Motor neuron (in vitro differentiated cells): ENCODE measurements at regions of chr2 and their contacts with region 1.

Region 1: DNA sequence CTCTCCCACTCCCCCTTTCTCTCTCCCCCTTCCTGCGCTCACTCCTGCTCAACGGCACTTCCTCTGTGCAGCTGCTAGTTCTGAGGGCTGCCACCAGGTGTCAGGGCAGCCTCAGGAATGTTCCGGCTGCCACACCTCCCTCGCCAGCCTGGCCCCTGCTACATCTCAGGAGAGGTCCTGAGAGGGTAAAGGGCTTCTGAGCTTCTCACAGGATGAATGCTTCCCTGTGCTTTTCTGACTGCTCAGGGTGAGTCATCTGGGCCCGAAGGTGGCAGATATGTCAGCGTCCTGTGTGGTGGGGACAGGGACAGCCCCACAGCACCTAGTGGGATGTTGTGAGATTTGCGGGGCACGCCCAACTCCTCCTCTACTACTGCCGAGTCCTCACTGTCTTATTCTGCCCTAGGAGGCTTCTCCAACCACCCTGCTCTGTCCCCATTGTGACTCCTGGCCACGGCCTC is 49.0 kb downstream of the PLEKHB2 start:
- ATAC-seq: peak; percentile 51 to 96 (median 94)
- H3K4me3 ChIP-seq: no peak overlapping the region
- H3K27ac ChIP-seq: no peak overlapping the region
- H3K4me1 ChIP-seq: peaks cover 0 to 3% of the 10 kb centered on the region in 2 donors

Region 2: GRCh38 chr2:130930740-130931659 is 223.1 kb before region 1 on chr2:
- in situ Hi-C with region 1: no loop called
- ATAC-seq: no peak
- H3K4me3 ChIP-seq: no peak overlapping the region
- H3K27ac ChIP-seq: no peak overlapping the region
- H3K4me1 ChIP-seq: no peaks in the 10 kb centered on the region

Region 3: DNA sequence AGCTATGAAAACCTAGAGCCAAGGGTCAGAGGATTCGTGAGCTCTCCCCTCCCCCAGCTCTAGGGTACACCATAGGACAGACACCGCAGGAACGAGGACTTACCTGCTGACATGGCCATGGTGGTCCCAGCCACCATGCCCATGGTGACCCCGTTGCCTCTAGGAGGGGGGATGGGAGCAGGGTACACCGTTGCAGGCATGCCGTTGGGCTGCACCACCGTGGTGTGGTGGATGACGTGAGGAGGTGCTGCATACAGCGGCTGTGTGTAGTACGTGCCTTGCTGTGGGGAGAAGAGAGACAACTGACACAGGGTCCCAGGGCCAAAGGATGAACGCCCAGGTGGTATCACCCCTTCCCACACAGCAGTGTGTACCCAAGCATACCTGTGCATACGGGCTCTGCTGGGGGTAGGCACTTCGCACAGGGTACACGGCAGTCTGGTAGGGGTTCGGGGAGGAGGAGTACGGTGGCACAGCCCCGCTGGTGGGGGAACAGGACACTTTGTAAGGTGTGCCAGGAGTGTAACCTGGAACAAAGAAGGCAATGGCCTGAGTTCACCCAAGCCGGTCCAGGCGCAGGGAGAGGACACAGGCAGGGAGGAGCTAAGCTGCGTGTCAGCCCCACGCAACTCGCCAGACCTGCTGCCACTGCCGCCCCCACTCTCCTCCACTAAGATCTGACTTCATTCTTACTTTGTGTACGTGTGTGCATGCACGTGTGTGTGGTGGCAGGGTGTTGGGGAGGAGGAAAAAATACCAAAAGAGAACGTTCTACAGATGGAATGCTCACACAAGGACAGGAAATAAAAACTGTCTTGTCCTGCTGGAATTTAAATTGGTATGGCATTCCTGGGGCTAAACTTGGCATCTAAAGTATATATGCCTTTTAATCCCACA is 98.7 kb before region 1 on chr2:
- in situ Hi-C with region 1: no loop called
- ATAC-seq: peak in 2 of 8 experiments; percentile 10 to 17
- H3K4me3 ChIP-seq: no peak overlapping the region
- H3K27ac ChIP-seq: no peak overlapping the region
- H3K4me1 ChIP-seq: no peaks in the 10 kb centered on the region

Region 4: GRCh38 chr2:131349021-131349420 is 194.9 kb after region 1 on chr2:
- in situ Hi-C with region 1: loop called in 1 of 9 experiments (anchors 25 kb)
- ATAC-seq: no peak
- H3K4me3 ChIP-seq: no peak overlapping the region
- H3K27ac ChIP-seq: no peak overlapping the region
- H3K4me1 ChIP-seq: peaks cover 0 to 4% of the 10 kb centered on the region in 2 donors

Region 5: DNA sequence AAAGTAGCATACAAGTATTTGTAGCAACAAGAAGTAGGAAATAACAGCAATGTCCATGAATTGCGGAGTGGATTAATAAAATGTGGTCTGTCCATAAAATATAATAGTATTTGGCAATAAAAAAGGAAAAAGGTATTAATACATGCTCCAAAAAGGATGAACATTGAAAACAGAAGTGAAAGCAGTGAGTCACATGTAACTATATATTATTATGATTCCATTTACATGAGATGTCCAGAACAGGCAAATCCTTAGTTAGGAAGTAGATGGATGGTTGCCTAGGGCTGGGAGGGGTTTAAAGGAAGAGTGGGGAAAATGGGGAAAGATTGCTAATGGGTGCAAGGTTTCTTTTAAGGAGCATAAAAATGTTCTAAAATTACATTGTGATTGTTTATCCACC is 418.1 kb after region 1 on chr2:
- in situ Hi-C with region 1: no loop called
- ATAC-seq: no peak
- H3K4me3 ChIP-seq: no peak overlapping the region
- H3K27ac ChIP-seq: no peak overlapping the region
- H3K4me1 ChIP-seq: peaks cover 0 to 3% of the 10 kb centered on the region in 2 donors